Adrenal gland (tissue), 19 donors: ENCODE measurements at regions of chr15 and their contacts with region 1.

Region 1: GRCh38 chr15:86663333-86663732 is 583.7 kb downstream of the AGBL1 start:
- DNase-seq: no peak
- H3K4me3 ChIP-seq: no peak overlapping the region
- H3K27ac ChIP-seq: no peak overlapping the region
- H3K4me1 ChIP-seq: no peaks in the 10 kb centered on the region
- H3K27me3 ChIP-seq: no peaks in the 10 kb centered on the region
- CTCF ChIP-seq: no peak
- POLR2A ChIP-seq: no peak

Region 2: DNA sequence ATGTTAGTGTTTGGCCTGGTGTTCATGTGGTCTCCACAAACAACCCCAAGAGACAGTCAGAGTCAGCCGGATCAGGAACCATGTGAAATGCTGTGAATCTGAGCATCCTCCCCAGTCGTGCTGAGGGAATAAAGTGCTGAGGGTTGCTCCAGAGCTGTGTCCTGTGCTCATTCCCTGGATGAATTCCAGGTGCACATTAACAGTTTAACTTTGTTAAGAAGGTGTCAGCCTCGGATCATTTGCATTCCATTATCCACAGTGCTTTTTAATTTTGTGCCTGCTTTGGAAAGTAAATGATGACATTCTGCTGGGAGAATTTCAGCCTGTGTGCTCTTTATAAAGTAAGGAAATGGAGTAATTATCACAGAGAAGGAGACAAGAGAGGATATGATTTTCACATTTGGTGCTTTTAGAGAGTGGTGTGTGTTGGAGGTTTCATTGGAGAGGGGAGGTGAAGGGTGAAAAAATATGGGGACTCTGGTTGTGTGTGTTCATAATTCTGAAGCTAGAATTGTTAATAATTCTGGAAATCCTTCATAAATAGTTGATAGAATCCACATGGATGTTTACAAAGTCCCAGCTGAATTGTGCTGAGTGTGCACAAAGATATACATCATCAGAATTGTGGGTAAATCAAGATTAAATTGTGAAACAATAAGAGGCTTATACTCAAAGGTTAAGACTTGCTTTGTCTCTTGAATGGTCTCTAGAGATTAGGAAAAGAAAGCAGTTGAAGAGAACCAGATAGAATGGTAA is 37.7 kb after region 1 on chr15:
- intact Hi-C with region 1: no loop called
- DNase-seq: no peak
- H3K4me3 ChIP-seq: no peak overlapping the region
- H3K27ac ChIP-seq: no peak overlapping the region
- H3K4me1 ChIP-seq: no peaks in the 10 kb centered on the region
- H3K27me3 ChIP-seq: peaks cover 7% of the 10 kb centered on the region
- CTCF ChIP-seq: no peak
- POLR2A ChIP-seq: no peak

Region 3: GRCh38 chr15:86743283-86743903 is 80.1 kb after region 1 on chr15:
- intact Hi-C with region 1: no loop called
- DNase-seq: peak in 2 of 7 donors; percentile 21 to 53
- H3K4me3 ChIP-seq: no peak overlapping the region
- H3K27ac ChIP-seq: no peak overlapping the region
- H3K4me1 ChIP-seq: no peaks in the 10 kb centered on the region
- H3K27me3 ChIP-seq: no peaks in the 10 kb centered on the region
- CTCF ChIP-seq: peak in 3 of 6 experiments; percentile 17 to 34 (median 30)
- POLR2A ChIP-seq: no peak

Region 4: GRCh38 chr15:86802244-86802643 is 138.9 kb after region 1 on chr15:
- intact Hi-C with region 1: loop called in 1 of 2 experiments (anchors 5 kb)
- DNase-seq: no peak
- H3K4me3 ChIP-seq: no peak overlapping the region
- H3K27ac ChIP-seq: no peak overlapping the region
- H3K4me1 ChIP-seq: no peaks in the 10 kb centered on the region
- H3K27me3 ChIP-seq: no peaks in the 10 kb centered on the region
- CTCF ChIP-seq: no peak
- POLR2A ChIP-seq: no peak